AG04449 (cell line): ENCODE measurements at regions of chr18 and their contacts with region 1.

Region 1: DNA sequence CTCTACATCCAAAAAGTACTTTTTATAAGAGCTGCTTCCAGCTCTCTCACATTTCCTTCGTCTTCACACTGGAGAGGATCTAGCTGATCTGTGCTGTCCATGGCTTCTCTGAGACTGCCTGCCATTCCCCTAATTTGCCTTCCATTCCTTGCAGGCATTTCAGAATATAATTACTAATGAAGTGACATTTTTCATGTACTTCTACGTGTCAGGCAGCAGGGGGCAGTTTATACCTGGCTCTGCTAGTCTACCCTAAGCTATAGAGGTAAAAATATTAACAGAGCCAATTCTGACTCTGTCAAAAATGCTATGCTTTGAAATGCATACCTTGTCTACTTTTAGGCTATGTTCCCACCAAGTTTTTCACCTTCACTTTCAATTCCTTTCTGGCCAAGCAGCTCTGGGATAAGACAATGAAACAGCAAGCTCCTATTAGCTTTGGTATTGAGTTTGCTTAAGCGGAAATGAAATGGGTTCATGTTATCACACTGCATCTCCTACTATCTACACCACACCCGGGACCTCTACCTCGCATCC is 81.9 kb downstream of the MEP1B start:
- DNase-seq: peak; percentile 3
- H3K4me3 ChIP-seq: no peak overlapping the region
- CTCF ChIP-seq: peak; percentile 59

Region 2: DNA sequence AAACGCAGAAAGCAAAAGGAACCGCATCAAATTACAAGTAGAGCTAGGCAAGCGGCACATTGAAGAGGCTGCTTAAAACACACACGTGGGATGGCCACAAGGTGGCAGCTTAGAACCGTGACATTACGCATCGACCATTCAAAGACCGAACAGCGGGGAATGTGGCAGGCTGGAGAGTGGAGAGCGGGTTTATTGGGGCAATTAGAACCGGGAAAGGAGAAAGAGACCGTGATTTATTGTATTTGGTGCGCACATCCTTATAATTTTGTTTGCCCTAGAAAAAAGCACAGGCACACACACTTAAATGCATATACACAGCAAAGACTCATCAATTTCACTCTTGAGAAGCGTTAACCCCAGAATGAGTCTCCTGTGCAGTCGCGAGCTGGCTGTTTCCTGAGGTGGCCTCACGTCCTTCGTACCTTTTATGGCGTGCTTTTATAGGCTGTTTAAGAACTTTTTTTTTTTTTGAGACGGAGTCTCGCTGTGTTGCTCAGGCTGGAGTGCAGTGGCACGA is 113.6 kb before region 1 on chr18:
- CTCF ChIA-PET with region 1: interaction called, 20 read pairs
- POLR2A ChIA-PET with region 1: no interaction called
- DNase-seq: peak; percentile 46
- H3K4me3 ChIP-seq: peak overlapping the region; percentile 38
- CTCF ChIP-seq: peak; percentile 86

Region 3: DNA sequence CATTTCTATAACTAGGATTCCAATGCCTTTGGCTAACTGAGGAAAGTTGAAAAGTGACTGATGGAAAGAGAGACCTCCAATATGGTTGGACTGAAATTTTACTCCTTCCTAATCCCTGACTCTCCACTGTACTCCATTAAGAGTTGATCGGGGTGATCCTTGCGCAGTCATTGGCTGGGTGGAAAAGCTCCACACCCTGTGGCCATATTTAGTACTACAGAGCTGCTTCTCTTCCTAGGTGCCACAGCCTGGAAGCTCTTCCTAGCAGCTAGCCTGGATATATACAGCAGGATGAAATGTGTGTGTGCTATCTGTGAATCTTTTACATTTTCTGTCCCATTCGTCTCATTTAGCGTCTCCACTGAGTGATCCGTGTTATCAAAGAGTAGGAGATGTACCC is 10.7 kb before region 1 on chr18:
- CTCF ChIA-PET with region 1: interaction called, 25 read pairs
- POLR2A ChIA-PET with region 1: no interaction called
- DNase-seq: no peak
- H3K4me3 ChIP-seq: no peak overlapping the region
- CTCF ChIP-seq: no peak

Region 4: DNA sequence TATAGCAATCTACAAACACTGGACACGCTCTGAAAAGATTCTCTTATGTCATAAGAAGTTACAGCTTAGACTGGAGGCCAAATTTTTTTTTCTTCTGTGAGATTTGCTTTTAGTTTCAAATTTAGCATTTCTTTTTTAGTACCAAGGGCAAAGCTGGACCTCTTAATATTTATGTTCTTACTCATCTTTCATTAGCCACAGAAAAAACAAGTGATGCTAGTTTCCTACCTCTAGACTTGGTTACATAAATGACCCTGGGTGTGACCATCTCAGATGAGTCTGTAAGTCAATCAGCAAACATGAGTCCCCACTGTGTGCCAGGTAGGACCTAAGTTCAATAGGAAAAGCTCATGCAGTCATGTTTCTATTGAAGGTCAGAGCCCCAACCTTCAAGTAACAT is 12.5 kb after region 1 on chr18:
- CTCF ChIA-PET with region 1: interaction called, 49 read pairs
- POLR2A ChIA-PET with region 1: no interaction called
- DNase-seq: no peak
- H3K4me3 ChIP-seq: no peak overlapping the region
- CTCF ChIP-seq: no peak

Region 5: GRCh38 chr18:32289483-32290075 is 17.8 kb after region 1 on chr18:
- CTCF ChIA-PET with region 1: interaction called, 49 read pairs
- POLR2A ChIA-PET with region 1: no interaction called
- DNase-seq: no peak
- H3K4me3 ChIP-seq: no peak overlapping the region
- CTCF ChIP-seq: peak; percentile 73

Region 6: DNA sequence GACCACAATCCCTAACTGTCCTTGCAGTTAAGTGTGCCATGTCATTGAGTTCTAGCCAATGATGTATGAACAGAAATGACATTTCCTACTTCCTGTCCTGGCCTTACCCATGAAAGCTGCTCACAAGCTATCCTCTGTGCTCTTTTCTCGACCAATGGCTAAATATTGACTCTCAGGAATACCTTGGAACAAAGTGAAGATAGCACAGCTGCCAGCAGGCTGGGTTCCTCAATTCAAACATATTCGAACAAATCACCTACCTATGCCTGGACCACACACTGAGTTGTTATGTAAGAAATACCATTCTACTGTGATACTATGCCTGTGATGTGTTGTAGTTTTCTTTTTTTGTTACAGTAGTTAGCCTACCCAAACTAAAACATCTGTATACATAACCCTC is 133.8 kb after region 1 on chr18:
- CTCF ChIA-PET with region 1: no interaction called
- POLR2A ChIA-PET with region 1: no interaction called
- DNase-seq: no peak
- H3K4me3 ChIP-seq: no peak overlapping the region
- CTCF ChIP-seq: no peak

Region 7: DNA sequence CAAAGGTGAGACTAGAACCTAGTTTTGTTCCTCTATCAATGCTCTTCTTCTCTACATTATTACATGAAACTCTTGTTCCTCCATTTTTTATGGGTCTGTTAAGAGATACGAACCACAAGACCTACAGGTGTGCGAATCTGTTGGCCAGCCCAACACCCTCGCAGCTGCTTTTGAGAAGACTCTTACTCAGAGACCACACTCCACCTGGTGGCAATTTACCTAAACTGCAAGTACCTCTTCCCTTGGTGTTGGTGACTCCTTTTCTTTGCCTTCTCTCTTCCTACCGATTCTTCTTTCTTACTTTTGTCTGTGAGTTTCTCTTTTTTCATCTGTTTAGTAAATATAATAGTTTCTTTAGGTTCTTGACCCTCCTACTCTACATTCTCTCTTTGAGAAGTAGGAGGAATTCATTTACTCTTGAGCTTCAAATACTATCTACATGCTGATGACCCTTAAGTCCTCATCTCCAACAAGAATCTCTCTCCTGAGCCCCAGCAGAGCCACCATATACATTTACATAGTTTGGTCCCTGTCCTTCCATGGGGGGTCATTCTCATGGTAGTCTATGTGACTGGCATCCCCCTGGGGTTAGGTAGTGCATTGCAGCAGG is 280.8 kb after region 1 on chr18:
- CTCF ChIA-PET with region 1: interaction called, 136 read pairs
- POLR2A ChIA-PET with region 1: no interaction called
- DNase-seq: peak; percentile 17
- H3K4me3 ChIP-seq: no peak overlapping the region
- CTCF ChIP-seq: peak; percentile 71